ENCODE measurements at regions of chr2 and their contacts with region 1.

Region 1: GRCh38 chr2:109690822-109691547 is 76.8 kb downstream of the SOWAHC start:
- DNase-seq: peak; percentile 94 to 95
- H3K4me3 ChIP-seq: no peak overlapping the region
- H3K4me3 Mint-ChIP-seq: peak overlapping the region; percentile 59
- H3K27ac Mint-ChIP-seq: peak overlapping the region; percentile 86
- H3K4me1 ChIP-seq: peaks cover 61% of the 10 kb centered on the region
- H3K4me1 Mint-ChIP-seq: peaks cover 61% of the 10 kb centered on the region
- H3K27me3 ChIP-seq: no peaks in the 10 kb centered on the region
- H3K27me3 Mint-ChIP-seq: no peaks in the 10 kb centered on the region
- CTCF ChIP-seq: no peak

Region 2: DNA sequence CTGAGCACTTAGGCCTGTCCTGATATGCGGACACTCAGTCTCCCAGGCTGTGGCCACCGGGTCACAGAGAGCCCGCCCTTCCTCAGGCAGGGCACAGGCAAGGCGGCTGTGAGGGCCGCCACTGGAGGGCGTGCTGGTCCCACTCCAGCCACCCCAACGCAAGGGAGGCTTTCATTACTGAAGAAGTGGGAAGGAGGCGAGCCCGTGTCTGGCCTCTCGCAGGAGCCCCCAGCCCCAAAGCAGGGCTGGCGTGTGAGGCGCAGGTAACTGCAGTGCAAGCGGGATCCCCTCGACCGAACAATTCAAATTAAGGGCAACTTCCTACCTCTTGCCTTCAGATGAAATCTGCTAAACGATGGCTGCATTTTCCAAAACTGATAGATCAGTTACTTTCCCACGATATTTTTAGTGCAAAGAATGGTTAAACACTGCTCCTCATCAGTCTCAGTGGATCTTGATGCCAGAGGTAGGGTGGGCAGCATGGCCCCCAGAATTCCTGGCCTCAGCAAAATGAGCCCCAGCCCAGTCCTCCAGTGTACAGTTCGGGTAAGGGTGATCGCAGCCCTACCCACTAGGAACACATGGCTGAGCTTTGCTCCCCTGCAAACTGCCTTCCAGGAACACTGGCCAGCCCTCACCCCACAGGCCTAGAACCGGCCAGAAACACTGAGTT is 174.4 kb before region 1 on chr2:
- CTCF ChIA-PET with region 1: no interaction called
- POLR2A ChIA-PET with region 1: no interaction called
- intact Hi-C with region 1: loop called (anchors 1 kb)
- DNase-seq: peak; percentile 75 to 82
- H3K4me3 ChIP-seq: no peak overlapping the region
- H3K4me3 Mint-ChIP-seq: no peak overlapping the region
- H3K27ac Mint-ChIP-seq: no peak overlapping the region
- H3K4me1 ChIP-seq: peaks cover 3% of the 10 kb centered on the region; the same call in 1 of the 2 replicates
- H3K4me1 Mint-ChIP-seq: no peaks in the 10 kb centered on the region
- H3K27me3 ChIP-seq: no peaks in the 10 kb centered on the region
- H3K27me3 Mint-ChIP-seq: no peaks in the 10 kb centered on the region
- CTCF ChIP-seq: peak; percentile 75 to 94

Region 3: GRCh38 chr2:109613922-109614714 is 76.9 kb before region 1 on chr2 and contains the starts of genes SEPTIN10 and SOWAHC:
- CTCF ChIA-PET with region 1: interaction called, 3 read pairs
- POLR2A ChIA-PET with region 1: interaction called, 29 read pairs
- intact Hi-C with region 1: loop called (anchors 2 kb)
- DNase-seq: peak; percentile 99 to 100
- H3K4me3 ChIP-seq: peak within 1 kb of the TSS; percentile 73
- H3K4me3 Mint-ChIP-seq: peak within 1 kb of the TSS; percentile 95
- H3K27ac Mint-ChIP-seq: peak within 1 kb of the TSS; percentile 95
- H3K4me1 ChIP-seq: peaks cover 32% of the 10 kb centered on the region
- H3K4me1 Mint-ChIP-seq: peaks cover 24% of the 10 kb centered on the region
- H3K27me3 ChIP-seq: no peaks in the 10 kb centered on the region
- H3K27me3 Mint-ChIP-seq: no peaks in the 10 kb centered on the region
- CTCF ChIP-seq: no peak
- total RNA-seq, gene SEPTIN10: 77.3 and 83.7 TPM in 2 replicates
- total RNA-seq, gene SOWAHC: 20.3 and 21.4 TPM in 2 replicates

Region 4: DNA sequence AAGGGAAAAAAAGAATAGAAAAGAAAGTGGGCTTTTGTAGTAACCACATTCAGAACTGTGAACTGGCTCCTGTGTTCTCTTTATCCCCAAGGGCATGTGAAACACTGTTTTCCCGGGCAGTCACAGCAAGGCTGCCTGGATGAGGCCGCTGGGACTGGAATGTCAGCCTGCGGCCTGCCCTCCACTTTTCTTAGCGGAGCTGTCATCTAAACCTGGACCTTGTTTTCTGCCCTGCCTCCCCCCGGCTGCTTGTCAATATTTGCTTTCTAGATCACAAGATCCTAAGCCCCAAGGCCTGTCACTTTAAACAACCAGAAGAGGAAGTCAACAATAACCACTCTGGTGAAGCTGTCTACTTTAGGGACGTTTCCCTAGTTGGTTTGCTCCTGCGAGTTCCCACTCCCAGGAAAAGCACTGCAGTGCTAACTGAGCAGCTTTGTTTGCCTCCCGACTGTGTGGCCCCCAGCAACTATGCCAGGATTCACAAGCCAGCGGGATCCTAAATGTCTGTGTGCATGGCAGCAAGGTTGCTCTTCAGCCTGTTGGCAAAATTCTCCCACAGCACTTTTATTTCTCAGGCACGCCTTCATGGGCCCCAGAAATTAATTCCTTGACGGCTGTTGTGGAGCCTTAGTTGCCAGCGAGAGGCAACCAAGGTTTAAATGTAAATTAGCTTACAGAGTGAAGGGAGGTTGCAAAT is 46.3 kb before region 1 on chr2:
- CTCF ChIA-PET with region 1: interaction called, 5 read pairs
- POLR2A ChIA-PET with region 1: interaction called, 5 read pairs
- intact Hi-C with region 1: loop called (anchors 2 kb)
- DNase-seq: peak; percentile 91 to 93
- H3K4me3 ChIP-seq: no peak overlapping the region
- H3K4me3 Mint-ChIP-seq: peak overlapping the region; percentile 55
- H3K27ac Mint-ChIP-seq: peak overlapping the region; percentile 78
- H3K4me1 ChIP-seq: peaks cover 47% of the 10 kb centered on the region
- H3K4me1 Mint-ChIP-seq: peaks cover 25% of the 10 kb centered on the region
- H3K27me3 ChIP-seq: no peaks in the 10 kb centered on the region
- H3K27me3 Mint-ChIP-seq: no peaks in the 10 kb centered on the region
- CTCF ChIP-seq: no peak

Region 5: GRCh38 chr2:109676346-109676902 is 14.6 kb before region 1 on chr2:
- CTCF ChIA-PET with region 1: interaction called, 3 read pairs
- POLR2A ChIA-PET with region 1: interaction called, 10 read pairs
- intact Hi-C with region 1: loop called (anchors 2 kb)
- DNase-seq: no peak
- H3K4me3 ChIP-seq: no peak overlapping the region
- H3K4me3 Mint-ChIP-seq: no peak overlapping the region
- H3K27ac Mint-ChIP-seq: peak overlapping the region; percentile 14
- H3K4me1 ChIP-seq: peaks cover 53% of the 10 kb centered on the region
- H3K4me1 Mint-ChIP-seq: peaks cover 56% of the 10 kb centered on the region
- H3K27me3 ChIP-seq: no peaks in the 10 kb centered on the region
- H3K27me3 Mint-ChIP-seq: no peaks in the 10 kb centered on the region
- CTCF ChIP-seq: no peak

Region 6: GRCh38 chr2:109736177-109736827 is 45.3 kb after region 1 on chr2:
- CTCF ChIA-PET with region 1: no interaction called
- POLR2A ChIA-PET with region 1: no interaction called
- intact Hi-C with region 1: loop called (anchors 1 kb)
- DNase-seq: peak; percentile 72 to 79
- H3K4me3 ChIP-seq: no peak overlapping the region
- H3K4me3 Mint-ChIP-seq: no peak overlapping the region
- H3K27ac Mint-ChIP-seq: no peak overlapping the region
- H3K4me1 ChIP-seq: 0 out of 2 replicates have a peak, but pooled peaks cover 3% of the 10 kb centered on the region
- H3K4me1 Mint-ChIP-seq: peaks cover 6% of the 10 kb centered on the region
- H3K27me3 ChIP-seq: no peaks in the 10 kb centered on the region
- H3K27me3 Mint-ChIP-seq: no peaks in the 10 kb centered on the region
- CTCF ChIP-seq: peak; percentile 70 to 89